Panc1 (cell line): ENCODE measurements at regions of chr20 and their contacts with region 1.

Region 1: GRCh38 chr20:33862709-33863403 is 51.7 kb downstream of the CHMP4B start:
- DNase-seq: no peak
- ATAC-seq: peak; percentile 86
- H3K4me3 ChIP-seq: peak overlapping the region in 1 of 2 experiments; percentile 23; a peak in 1 of 4 replicates
- H3K27ac ChIP-seq: no peak overlapping the region
- H3K4me1 ChIP-seq: peaks cover 28% of the 10 kb centered on the region
- H3K27me3 ChIP-seq: no peaks in the 10 kb centered on the region
- CTCF ChIP-seq: peak; percentile 94

Region 2: DNA sequence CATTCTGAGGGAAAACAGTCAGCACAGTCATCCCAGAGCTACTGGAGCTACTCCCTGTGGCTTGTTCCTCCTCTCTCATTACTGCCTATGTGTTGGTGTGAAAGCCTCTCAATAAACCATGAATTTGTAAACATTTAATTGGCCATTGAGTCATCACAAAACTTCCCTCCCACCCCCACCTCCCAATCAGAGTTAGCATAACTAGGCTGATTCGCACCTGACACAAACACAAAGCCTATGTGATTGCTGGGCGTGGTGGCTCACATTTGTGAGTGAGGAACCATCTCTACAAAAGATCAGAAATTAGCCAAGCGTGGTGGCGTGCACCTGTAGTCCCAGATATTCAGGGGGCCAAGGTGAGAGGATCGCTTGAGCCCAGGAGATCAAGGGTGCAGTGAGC is 402.1 kb before region 1 on chr20:
- CTCF ChIA-PET with region 1: no interaction called
- POLR2A ChIA-PET with region 1: no interaction called
- in situ Hi-C with region 1: no loop called
- intact Hi-C with region 1: no loop called
- DNase-seq: no peak
- ATAC-seq: no peak
- H3K4me3 ChIP-seq: no peak overlapping the region
- H3K27ac ChIP-seq: no peak overlapping the region
- H3K4me1 ChIP-seq: no peaks in the 10 kb centered on the region
- H3K27me3 ChIP-seq: no peaks in the 10 kb centered on the region
- CTCF ChIP-seq: no peak

Region 3: DNA sequence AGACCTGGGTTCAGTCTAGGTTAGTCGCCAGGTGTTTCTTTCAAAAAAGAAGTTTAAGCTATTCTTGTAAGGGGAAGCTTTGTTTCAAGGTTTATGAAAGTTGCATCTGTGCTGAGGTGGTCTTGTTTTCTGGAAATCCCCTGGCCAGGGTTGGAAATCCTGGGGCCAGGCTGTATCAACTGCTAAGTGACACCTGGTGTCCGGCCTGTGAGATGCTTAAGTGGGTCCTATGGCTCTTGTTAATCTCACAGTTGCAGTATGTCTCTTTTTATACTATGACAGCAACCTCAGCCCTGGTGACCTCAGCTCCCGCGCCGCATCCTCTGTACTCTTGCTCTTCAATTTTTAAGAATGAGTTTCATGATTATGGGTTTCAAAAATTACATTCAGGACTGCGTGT is 20.3 kb after region 1 on chr20:
- CTCF ChIA-PET with region 1: no interaction called
- POLR2A ChIA-PET with region 1: no interaction called
- in situ Hi-C with region 1: no loop called
- intact Hi-C with region 1: no loop called
- DNase-seq: no peak
- ATAC-seq: no peak
- H3K4me3 ChIP-seq: no peak overlapping the region
- H3K27ac ChIP-seq: no peak overlapping the region
- H3K4me1 ChIP-seq: no peaks in the 10 kb centered on the region
- H3K27me3 ChIP-seq: no peaks in the 10 kb centered on the region
- CTCF ChIP-seq: no peak

Region 4: DNA sequence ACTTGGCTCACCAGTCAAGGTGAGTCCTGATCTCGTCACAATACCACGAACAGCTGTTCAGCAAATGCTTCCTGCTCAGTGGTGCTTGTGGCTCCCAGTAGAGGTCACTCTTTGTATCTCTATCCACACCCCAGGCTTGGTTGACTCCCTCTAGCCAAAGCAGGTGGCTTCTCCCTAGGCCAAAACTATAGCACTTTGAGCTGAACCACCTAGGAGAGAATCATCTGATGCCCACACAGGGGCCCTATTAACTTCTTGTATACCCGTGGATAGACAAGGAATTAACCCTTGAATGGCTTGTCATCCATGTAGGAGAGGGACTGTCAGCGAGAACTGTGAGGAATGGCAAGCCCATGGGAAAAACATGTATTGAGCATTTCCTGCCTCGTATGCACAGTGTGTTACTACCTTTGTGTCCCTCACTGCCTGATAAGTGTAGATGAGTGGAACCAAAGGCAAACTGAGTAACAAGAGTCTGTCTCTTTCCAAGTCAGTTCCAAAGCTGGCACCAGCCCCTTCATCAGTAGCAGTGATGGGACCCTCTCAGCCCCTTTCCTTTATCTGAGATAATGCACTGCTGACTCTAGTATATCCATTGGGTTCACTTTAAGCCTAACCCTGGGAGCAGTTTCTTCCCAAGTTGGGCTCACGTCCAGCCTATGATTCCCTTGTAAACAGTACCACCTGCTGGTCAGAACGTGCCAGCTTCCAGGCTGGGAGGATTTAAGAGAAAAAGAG is 206.7 kb after region 1 on chr20:
- CTCF ChIA-PET with region 1: no interaction called
- POLR2A ChIA-PET with region 1: no interaction called
- in situ Hi-C with region 1: no loop called
- intact Hi-C with region 1: loop called (anchors 5 kb)
- DNase-seq: peak; percentile 73
- ATAC-seq: peak; percentile 93
- H3K4me3 ChIP-seq: no peak overlapping the region
- H3K27ac ChIP-seq: no peak overlapping the region
- H3K4me1 ChIP-seq: peaks cover 10% of the 10 kb centered on the region
- H3K27me3 ChIP-seq: no peaks in the 10 kb centered on the region
- CTCF ChIP-seq: peak; percentile 81

Region 5: GRCh38 chr20:34083137-34083536 is 220.3 kb after region 1 on chr20:
- CTCF ChIA-PET with region 1: no interaction called
- POLR2A ChIA-PET with region 1: no interaction called
- in situ Hi-C with region 1: no loop called
- intact Hi-C with region 1: loop called (anchors 5 kb)
- DNase-seq: no peak
- ATAC-seq: 0 out of 2 replicates have a peak, but pooled peaks have one; percentile 42
- H3K4me3 ChIP-seq: no peak overlapping the region
- H3K27ac ChIP-seq: no peak overlapping the region
- H3K4me1 ChIP-seq: no peaks in the 10 kb centered on the region
- H3K27me3 ChIP-seq: no peaks in the 10 kb centered on the region
- CTCF ChIP-seq: no peak